ENCODE measurements at regions of chr2 and their contacts with region 1.

Region 1: DNA sequence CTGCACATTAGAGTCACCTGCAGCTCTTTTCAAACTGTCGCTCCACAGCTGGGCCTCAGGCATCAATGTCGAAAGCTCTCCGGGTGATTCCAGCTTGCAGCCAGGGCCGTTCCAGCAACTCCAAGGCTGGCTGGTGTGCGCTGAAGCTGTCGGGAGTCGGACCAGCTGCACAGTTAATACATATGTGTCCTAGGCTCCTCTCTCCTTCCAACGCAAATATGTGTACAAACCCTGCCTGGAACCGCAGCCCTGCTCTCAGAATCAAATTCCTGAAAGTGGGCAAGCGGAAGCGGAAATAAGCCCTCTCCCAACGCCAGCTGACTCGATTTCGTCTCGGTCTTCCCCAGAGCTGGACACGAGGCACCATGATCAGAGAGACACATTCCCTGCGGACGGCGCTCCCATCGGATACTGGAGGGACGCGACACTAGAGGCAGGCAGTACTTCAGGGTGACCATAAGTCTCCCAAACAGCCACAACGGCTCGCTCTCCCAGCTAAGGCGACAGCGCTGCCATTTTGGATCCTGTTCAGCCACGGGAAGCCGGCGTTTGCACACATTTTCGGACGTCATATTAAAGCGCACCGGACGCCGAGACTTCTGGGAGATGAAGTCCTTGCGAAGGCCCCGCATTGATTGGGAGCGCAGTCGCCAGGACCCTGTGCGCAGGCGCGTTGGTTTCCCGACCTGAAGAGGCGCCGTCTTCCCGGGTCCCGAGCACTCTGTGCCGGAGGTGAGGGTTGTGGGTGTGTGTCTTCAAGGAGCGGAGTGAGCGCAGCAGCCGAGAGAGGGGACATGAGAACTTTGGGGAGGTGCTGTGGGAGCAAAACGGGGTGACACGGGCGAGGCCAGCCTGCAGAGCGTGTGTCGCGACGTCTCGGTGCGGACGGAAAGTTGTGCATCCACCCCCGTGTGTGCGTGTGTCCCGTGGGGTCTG is at the start of gene ZNF2:
- DNase-seq: peak; percentile 97
- H3K4me3 ChIP-seq: peak within 1 kb of the TSS; percentile 73 to 98 (median 88)
- H3K27ac ChIP-seq: peak within 1 kb of the TSS; percentile 82
- H3K4me1 ChIP-seq: peaks cover 8% of the 10 kb centered on the region
- H3K27me3 ChIP-seq: no peaks in the 10 kb centered on the region
- CTCF ChIP-seq: no peak
- total RNA-seq, gene ZNF2: 4.3 to 8.8 TPM

Region 2: DNA sequence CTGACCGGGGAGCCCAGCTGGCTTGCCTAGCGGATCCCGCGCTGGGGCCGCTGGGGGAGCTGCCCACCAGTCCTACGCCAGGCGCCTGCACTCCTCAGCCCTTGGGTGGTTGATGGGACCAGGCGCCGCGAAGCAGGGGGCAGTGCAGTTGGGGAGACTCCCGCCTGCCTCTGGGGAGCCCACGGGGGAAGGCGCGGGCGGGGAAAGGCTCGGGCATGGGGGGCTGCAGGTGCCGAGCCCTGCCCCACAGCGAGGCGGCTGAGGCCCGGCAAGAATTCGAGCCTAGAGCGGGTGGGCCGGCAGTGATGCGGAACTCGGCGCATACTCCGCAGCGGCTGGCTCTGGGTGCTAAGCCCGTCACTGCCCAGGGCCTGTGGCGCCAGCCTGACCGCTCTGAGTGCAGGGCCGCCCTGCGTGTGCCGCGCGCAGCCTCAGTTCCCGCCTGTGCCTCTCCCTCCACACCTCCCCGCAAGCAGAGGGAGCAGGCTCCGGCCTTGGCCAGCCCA is 543.2 kb before region 1 on chr2:
- CTCF ChIA-PET with region 1: no interaction called
- dilution Hi-C with region 1: no loop called
- in situ Hi-C with region 1: no loop called
- intact Hi-C with region 1: no loop called
- DNase-seq: no peak
- H3K4me3 ChIP-seq: no peak overlapping the region
- H3K27ac ChIP-seq: no peak overlapping the region
- H3K4me1 ChIP-seq: no peaks in the 10 kb centered on the region
- H3K27me3 ChIP-seq: no peaks in the 10 kb centered on the region
- CTCF ChIP-seq: no peak

Region 3: GRCh38 chr2:95109260-95109659 is 56.1 kb before region 1 on chr2:
- CTCF ChIA-PET with region 1: no interaction called
- dilution Hi-C with region 1: no loop called
- in situ Hi-C with region 1: no loop called
- intact Hi-C with region 1: no loop called
- DNase-seq: no peak
- H3K4me3 ChIP-seq: no peak overlapping the region
- H3K27ac ChIP-seq: no peak overlapping the region
- H3K4me1 ChIP-seq: no peaks in the 10 kb centered on the region
- H3K27me3 ChIP-seq: no peaks in the 10 kb centered on the region
- CTCF ChIP-seq: no peak

Region 4: DNA sequence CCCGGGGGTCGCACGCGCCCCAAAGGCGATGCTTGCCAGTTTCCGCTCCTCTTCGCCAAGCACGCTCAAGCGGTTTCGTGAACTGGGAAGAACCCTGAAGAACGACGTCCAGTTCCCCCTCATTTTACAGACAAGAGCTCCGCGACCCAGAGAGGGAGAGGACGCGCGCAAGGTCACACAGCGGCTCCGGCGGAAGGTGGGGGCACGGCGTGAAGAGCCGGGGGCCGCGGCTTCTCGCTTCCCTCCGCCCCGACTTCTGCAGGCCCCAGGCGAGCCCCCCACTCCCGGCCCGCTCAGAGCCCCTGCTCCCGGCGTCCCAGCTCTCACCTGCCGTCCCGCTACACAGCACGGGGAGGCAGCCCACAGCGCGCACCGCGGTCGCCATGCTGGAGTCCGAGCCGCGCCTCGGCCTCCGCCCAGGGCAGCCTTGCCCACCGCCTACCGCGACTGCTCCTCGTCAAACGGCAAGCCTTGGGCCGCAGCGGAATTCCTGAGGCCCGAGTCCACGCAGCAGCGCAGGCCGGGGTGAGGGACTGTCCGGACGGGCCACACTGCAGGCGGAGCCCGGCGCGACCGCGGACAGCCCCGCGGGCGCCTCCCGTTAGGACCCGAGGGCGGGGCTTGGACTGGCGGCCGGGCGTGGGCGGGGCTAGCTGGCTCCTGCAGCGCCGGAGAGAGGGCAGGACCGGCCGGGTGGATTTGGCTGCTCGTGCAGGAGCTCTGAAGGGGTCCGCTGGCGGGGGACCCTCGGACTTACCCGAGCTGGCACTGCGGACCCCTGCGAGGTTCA is 43.8 kb before region 1 on chr2 and contains the start of gene MRPS5:
- CTCF ChIA-PET with region 1: no interaction called
- dilution Hi-C with region 1: no loop called
- in situ Hi-C with region 1: no loop called
- intact Hi-C with region 1: loop called (anchors 2 kb)
- DNase-seq: peak; percentile 72
- H3K4me3 ChIP-seq: peak within 1 kb of the TSS; percentile 91 to 97 (median 92)
- H3K27ac ChIP-seq: peak within 1 kb of the TSS; percentile 82
- H3K4me1 ChIP-seq: peaks cover 10% of the 10 kb centered on the region
- H3K27me3 ChIP-seq: no peaks in the 10 kb centered on the region
- CTCF ChIP-seq: peak in 1 of 2 donors; percentile 32
- total RNA-seq, gene MRPS5: 21.7 to 46.8 TPM

Measured in mammary epithelial cell (primary cell).